K562 (cell line): ENCODE measurements at regions of chr3 and their contacts with region 1.

Region 1: DNA sequence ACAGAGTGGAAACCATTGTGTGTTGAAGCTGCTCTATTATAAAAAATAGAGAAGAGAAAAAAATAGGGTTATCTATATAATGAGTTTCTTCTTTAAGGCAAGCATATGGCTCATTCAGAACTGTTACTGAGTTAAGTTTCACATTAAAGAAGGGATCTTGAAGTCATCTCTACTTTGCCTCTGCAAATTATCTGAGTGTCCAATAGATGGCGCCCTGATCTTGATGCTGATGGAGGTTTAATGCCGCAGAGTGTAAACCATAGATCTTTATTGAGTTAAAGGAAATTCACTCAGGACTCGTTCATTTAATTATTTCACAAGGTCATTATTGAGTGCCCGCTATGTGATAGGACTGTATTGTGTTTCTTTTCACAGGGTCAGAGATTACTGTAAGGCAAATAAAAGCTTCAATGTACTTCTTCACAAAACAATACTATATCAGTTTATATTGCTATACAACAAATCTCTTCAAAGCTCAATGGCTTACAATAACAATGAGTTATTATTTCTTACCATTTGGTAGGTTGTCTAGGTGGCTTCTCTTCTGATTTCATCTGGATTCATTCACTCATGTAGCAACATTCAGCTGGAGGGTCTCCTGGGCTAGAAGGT is 171.4 kb downstream of the NSUN3 start:
- DNase-seq: peak; percentile 9 to 30 (median 12)
- ATAC-seq: peak; percentile 71
- H3K4me3 ChIP-seq: no peak overlapping the region
- H3K27ac ChIP-seq: no peak overlapping the region
- H3K4me1 ChIP-seq: no peaks in the 10 kb centered on the region
- H3K27me3 ChIP-seq: no peaks in the 10 kb centered on the region
- CTCF ChIP-seq: peak; percentile 37 to 62 (median 48); a peak in 5 of 6 replicates
- EP300 ChIP-seq: no peak
- POLR2A ChIP-seq: no peak
- RAD21 ChIP-seq: peak; percentile 23 to 61; a peak in 3 of 4 replicates

Region 2: GRCh38 chr3:94115482-94115881 is 118.8 kb before region 1 on chr3:
- CTCF ChIA-PET with region 1: no interaction called
- POLR2A ChIA-PET with region 1: no interaction called
- in situ Hi-C with region 1: no loop called
- intact Hi-C with region 1: loop called (anchors 5 kb)
- DNase-seq: peak in 1 of 4 experiments; percentile 6
- ATAC-seq: no peak
- H3K4me3 ChIP-seq: no peak overlapping the region
- H3K27ac ChIP-seq: no peak overlapping the region
- H3K4me1 ChIP-seq: no peaks in the 10 kb centered on the region
- H3K27me3 ChIP-seq: no peaks in the 10 kb centered on the region
- CTCF ChIP-seq: peak in 2 of 3 experiments; percentile 13 to 43; a peak in 2 of 6 replicates
- EP300 ChIP-seq: no peak
- POLR2A ChIP-seq: no peak
- RAD21 ChIP-seq: peak; percentile 6 to 47; a peak in 2 of 4 replicates